Activated CD4-positive, alpha-beta T cell treated with anti-CD3 and anti-CD28 coated beads, Interleukin-2, amount 10 ng/mL, durations not matched to agents 7 days and 5 days (primary cell): ENCODE measurements at regions of chr10 and their contacts with region 1.

Region 1: DNA sequence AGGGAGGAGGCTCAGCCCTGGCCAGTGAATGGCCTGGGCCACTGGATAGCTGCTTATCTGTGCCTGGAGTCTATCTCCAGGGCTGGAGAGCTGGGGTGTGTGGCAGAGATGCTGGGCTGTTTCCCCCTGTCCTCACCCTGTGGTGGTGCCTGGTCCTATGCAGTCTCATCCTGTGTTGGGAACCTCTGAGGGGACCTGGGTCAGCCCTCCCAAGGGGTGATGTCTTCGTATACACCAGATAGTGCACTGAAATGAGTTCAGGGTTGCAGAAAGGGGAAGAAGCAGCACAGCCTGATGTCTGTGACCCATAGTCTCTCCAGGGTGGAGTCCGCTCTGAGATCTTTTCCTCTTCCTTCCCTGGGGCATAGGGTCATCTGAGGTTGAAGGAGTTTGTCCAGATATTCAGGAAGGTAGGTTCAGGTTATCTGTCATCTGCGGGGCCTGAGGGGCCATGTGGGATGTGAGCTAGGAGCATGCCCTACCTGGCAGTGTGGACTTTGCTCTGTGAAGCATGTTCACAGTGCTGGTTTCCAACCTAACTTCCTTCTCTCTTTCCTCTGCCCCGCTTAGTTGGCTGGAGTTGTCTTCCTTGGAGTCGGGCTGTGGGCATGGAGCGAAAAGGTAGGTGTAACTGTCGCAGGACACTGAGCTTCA is 33.4 kb upstream of the SH2D4B start:
- DNase-seq: no peak
- H3K4me3 Mint-ChIP-seq: no peak overlapping the region
- H3K27ac Mint-ChIP-seq: peak overlapping the region; percentile 87
- H3K4me1 Mint-ChIP-seq: peaks cover 71% of the 10 kb centered on the region
- H3K27me3 Mint-ChIP-seq: no peaks in the 10 kb centered on the region

Region 2: DNA sequence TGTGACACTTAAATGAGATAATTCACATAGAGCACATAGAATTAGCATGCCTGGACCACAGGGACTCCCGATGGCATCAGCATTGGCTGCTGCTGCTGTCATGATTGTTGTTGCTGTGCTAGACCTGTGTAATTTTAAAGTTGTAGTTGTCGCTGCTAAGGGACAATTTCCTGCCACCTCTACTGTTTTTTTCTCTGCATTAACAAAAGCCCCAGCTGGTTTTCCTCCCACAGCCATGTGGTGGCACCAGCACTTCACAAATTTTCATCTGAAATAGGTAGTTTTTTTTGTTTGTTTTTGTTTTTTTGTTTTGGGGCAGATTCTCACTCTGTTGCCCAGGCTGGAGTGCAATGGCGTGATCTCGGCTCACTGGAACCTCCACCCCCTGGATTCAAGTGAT is 121.3 kb before region 1 on chr10:
- CTCF ChIA-PET with region 1: interaction called, 13 read pairs
- POLR2A ChIA-PET with region 1: no interaction called
- DNase-seq: peak; percentile 74
- H3K4me3 Mint-ChIP-seq: no peak overlapping the region
- H3K27ac Mint-ChIP-seq: no peak overlapping the region
- H3K4me1 Mint-ChIP-seq: peaks cover 17% of the 10 kb centered on the region
- H3K27me3 Mint-ChIP-seq: peaks cover 2% of the 10 kb centered on the region

Region 3: DNA sequence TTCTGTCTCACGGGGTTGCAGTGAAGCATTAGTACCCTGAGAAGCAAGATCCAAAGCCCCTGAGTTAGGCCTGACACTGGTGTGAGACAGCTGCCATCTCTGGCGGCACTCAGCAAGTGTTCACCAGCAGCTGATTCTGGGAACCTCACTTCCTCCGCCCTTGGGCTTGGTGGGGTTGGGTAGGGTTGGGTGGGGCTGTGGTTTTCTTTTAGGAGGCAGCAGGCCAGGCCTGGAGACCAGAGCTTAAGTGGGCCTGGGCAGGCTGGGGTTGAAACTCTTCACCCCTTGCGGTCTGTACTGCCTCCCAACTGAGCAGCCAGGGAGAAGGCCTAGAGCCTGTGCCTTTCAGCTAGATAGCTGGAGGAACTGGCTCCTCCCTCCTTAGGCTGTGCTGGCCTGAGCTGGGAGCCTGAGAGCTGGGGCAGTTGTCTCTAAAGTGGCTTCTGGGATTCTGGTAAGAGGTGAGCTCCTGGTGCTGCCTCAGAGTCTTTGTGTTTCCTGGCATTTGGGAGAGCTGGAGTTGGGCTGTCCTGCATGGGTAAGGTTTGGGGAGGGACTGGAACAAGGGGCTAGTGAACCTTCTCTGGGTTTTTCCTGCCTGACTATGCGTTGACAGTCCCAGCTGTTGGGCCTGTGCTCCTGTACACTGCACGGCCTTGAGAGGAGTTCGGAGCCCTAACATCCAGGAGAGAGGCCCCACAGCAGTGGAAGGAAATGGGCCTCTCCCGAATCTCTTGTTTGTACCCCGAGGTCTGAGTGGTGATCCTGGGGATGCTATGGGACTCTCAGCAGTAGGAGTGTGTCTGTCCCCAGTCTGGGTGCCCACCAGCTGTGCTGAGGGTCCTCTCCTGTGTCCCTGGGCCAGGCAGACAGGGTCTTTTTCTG is 45.0 kb before region 1 on chr10:
- CTCF ChIA-PET with region 1: interaction called, 39 read pairs
- POLR2A ChIA-PET with region 1: interaction called, 6 read pairs
- DNase-seq: peak; percentile 84
- H3K4me3 Mint-ChIP-seq: peak overlapping the region; percentile 98
- H3K27ac Mint-ChIP-seq: peak overlapping the region; percentile 86
- H3K4me1 Mint-ChIP-seq: peaks cover 80% of the 10 kb centered on the region
- H3K27me3 Mint-ChIP-seq: no peaks in the 10 kb centered on the region

Region 4: DNA sequence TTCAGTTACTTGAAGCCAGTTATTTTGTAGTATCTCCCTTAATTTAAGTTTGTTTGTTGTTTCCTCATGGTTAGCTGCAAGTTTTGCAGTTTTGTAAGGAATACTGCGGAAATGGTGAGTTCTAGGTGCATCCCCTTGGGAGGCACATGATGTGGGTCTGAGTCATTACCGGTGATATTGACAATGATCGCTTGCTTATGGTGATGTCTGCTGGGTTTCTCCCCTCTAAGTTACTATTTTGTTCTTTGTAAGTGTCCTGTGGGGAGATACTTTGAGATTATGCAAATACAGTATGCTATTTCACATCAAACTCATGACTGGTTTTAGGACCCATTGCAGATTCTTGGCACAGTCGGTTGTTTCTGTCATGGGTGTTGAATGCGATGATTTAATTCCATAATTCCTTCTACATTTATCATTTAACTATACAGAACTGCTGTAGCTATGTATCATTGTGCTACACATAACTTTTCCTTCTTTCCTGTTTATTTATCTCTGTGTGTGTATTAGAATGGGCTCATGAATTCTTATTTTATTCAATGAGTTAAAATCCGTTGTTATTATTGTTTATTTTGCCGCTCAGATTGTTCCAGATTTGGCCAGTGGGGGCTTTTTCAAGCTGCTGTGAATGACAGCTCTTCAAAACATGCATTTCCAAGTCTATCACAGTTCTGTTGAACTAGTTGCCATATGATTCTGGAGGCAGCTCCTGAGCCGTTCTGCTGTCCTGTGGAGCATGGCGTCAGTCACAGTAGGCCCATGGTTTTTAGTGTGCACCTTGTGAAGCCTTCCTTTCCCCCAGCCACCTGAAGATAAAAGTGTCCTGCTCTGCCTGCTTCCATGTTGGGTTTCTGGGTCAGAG is 31.8 kb before region 1 on chr10:
- CTCF ChIA-PET with region 1: interaction called, 13 read pairs
- POLR2A ChIA-PET with region 1: no interaction called
- DNase-seq: no peak
- H3K4me3 Mint-ChIP-seq: peak overlapping the region; percentile 15
- H3K27ac Mint-ChIP-seq: peak overlapping the region; percentile 83
- H3K4me1 Mint-ChIP-seq: peaks cover 86% of the 10 kb centered on the region
- H3K27me3 Mint-ChIP-seq: no peaks in the 10 kb centered on the region

Region 5: DNA sequence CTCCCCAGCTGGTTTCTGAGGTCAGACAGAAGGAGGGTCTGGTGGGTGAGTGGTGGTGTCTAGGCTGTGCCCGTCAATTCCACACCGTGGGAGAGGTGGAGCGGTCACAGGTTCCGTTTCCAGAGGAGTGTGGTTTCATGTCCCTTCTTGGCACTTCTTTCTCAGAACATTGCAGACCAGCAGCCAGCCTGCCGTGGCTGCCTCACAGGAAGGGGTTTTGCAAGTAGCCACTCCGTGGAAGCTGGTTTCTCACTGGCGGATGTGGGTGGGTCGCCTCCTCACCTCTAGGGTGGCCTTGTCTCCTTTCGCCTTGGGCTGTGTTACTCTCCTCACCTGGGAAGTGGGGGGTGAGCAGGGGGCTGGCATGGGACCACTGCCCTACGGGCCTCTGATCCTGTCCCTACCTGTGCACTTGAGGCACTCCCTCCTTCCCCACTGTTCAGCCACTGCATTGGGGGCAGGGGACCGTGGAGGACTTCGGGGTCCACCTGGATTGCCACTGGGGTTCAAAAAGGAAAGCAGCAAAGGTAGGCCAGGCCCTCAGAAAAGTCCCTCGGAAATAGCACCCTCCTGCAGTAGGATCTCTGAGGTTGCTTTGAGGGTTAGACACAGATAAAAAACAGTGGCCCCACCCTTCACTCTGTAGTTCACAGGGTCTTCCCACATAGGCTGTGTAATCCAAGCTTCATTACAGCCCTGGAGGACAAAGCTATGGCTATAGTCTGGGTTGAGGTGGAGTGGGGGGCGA is 16.3 kb before region 1 on chr10:
- CTCF ChIA-PET with region 1: interaction called, 58 read pairs
- POLR2A ChIA-PET with region 1: no interaction called
- DNase-seq: peak; percentile 78
- H3K4me3 Mint-ChIP-seq: peak overlapping the region; percentile 64
- H3K27ac Mint-ChIP-seq: peak overlapping the region; percentile 89
- H3K4me1 Mint-ChIP-seq: peaks cover 99% of the 10 kb centered on the region
- H3K27me3 Mint-ChIP-seq: no peaks in the 10 kb centered on the region

Region 6: GRCh38 chr10:80535671-80536365 is 31.5 kb after region 1 on chr10:
- CTCF ChIA-PET with region 1: interaction called, 10 read pairs
- POLR2A ChIA-PET with region 1: no interaction called
- DNase-seq: peak; percentile 65
- H3K4me3 Mint-ChIP-seq: peak overlapping the region; percentile 78
- H3K27ac Mint-ChIP-seq: peak overlapping the region; percentile 94
- H3K4me1 Mint-ChIP-seq: peaks cover 37% of the 10 kb centered on the region
- H3K27me3 Mint-ChIP-seq: no peaks in the 10 kb centered on the region